CD8-positive, alpha-beta T cell (primary cell): ENCODE measurements at regions of chr11 and their contacts with region 1.

Region 1: GRCh38 chr11:111777094-111778046 is 11.2 kb upstream of the PPP2R1B start:
- DNase-seq: peak in 5 of 9 experiments; percentile 2 to 80 (median 21)
- ATAC-seq: peak; percentile 93
- H3K4me3 ChIP-seq: no peak overlapping the region
- H3K4me3 Mint-ChIP-seq: no peak overlapping the region
- H3K27ac ChIP-seq: no peak overlapping the region
- H3K27ac Mint-ChIP-seq: no peak overlapping the region
- H3K4me1 ChIP-seq: no peaks in the 10 kb centered on the region
- H3K4me1 Mint-ChIP-seq: no peaks in the 10 kb centered on the region
- H3K27me3 ChIP-seq: no peaks in the 10 kb centered on the region
- H3K27me3 Mint-ChIP-seq: no peaks in the 10 kb centered on the region
- CTCF ChIP-seq: peak; percentile 75

Region 2: GRCh38 chr11:111454561-111455192 is 322.7 kb before region 1 on chr11:
- CTCF ChIA-PET with region 1: interaction called, 6 read pairs
- POLR2A ChIA-PET with region 1: no interaction called
- intact Hi-C with region 1: loop called (anchors 2 to 5 kb)
- DNase-seq: peak in 8 of 9 experiments; percentile 19 to 61 (median 49)
- ATAC-seq: peak; percentile 61
- H3K4me3 ChIP-seq: no peak overlapping the region
- H3K4me3 Mint-ChIP-seq: no peak overlapping the region
- H3K27ac ChIP-seq: no peak overlapping the region
- H3K27ac Mint-ChIP-seq: no peak overlapping the region
- H3K4me1 ChIP-seq: no peaks in the 10 kb centered on the region
- H3K4me1 Mint-ChIP-seq: no peaks in the 10 kb centered on the region
- H3K27me3 ChIP-seq: no peaks in the 10 kb centered on the region
- H3K27me3 Mint-ChIP-seq: peaks cover 8% of the 10 kb centered on the region
- CTCF ChIP-seq: peak; percentile 20

Region 3: DNA sequence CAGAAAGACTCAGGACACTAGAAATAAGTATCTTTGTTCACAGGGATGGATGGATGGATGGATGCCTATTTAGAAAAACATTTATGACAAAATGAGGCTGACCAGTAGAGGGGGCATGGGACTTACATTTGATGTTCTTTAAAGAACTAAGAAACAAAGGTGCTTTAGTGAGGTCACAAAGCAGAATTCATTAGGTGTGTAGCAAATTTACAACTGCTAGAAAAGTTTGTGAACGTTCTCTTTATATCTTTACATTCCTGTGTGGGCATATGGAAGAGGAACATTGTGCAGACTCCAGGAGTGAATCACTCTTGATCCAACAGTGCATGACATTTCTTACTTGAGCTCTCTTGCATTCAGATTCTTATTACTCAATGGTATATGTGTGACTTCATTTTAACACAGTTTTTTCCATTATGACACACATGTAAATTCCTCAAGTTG is 191.0 kb before region 1 on chr11:
- CTCF ChIA-PET with region 1: interaction called, 163 read pairs
- POLR2A ChIA-PET with region 1: no interaction called
- intact Hi-C with region 1: loop called (anchors 1 kb)
- DNase-seq: peak in 8 of 9 experiments; percentile 8 to 77 (median 58)
- ATAC-seq: peak; percentile 83
- H3K4me3 ChIP-seq: no peak overlapping the region
- H3K4me3 Mint-ChIP-seq: no peak overlapping the region
- H3K27ac ChIP-seq: no peak overlapping the region
- H3K27ac Mint-ChIP-seq: no peak overlapping the region
- H3K4me1 ChIP-seq: no peaks in the 10 kb centered on the region
- H3K4me1 Mint-ChIP-seq: no peaks in the 10 kb centered on the region
- H3K27me3 ChIP-seq: no peaks in the 10 kb centered on the region
- H3K27me3 Mint-ChIP-seq: no peaks in the 10 kb centered on the region
- CTCF ChIP-seq: peak; percentile 76

Region 4: DNA sequence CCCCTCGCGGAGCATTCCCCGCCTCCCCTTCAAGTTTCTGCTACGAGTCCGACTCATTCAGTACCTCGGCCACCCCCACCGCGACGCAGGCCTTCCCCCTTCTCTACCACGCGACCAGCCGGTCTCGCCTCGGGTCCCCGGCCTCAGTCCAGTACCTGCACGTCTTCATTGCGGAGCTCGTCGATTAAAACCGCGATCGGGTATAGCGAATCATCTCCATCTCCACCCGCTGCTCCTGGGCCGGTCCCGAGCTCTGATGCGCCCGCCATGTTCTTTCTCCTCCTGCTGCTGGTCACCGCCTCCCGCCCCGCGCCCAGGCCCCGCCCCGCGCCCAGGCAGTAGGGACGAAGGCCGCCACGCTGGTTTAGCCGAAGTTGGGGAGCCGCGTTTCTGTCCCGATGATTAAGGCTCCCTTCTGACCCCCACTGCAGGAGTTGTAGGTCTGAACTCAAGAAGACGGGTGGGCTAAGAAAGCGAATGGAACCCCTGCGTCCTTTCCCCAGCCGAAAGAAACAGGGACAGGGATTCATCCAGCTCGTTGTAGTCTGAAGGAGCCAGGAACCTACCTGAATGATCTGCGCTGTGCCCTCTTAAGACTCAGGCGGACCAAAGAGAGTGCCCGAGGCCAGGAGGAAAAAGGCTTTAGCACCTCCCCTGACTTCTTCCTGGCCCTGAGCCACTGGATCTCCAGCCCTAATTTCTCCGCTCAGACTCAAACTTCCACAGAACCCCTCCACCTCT is 11.1 kb before region 1 on chr11 and contains the start of gene PPP2R1B:
- CTCF ChIA-PET with region 1: interaction called, 50 read pairs
- POLR2A ChIA-PET with region 1: interaction called, 5 read pairs
- intact Hi-C with region 1: no loop called
- DNase-seq: peak; percentile 33 to 83 (median 73)
- ATAC-seq: peak; percentile 98
- H3K4me3 ChIP-seq: peak within 1 kb of the TSS; percentile 86 to 97
- H3K4me3 Mint-ChIP-seq: peak within 1 kb of the TSS; percentile 99
- H3K27ac ChIP-seq: peak within 1 kb of the TSS; percentile 63 to 67
- H3K27ac Mint-ChIP-seq: peak within 1 kb of the TSS; percentile 97
- H3K4me1 ChIP-seq: peaks cover 12% of the 10 kb centered on the region
- H3K4me1 Mint-ChIP-seq: peaks cover 39% of the 10 kb centered on the region
- H3K27me3 ChIP-seq: no peaks in the 10 kb centered on the region
- H3K27me3 Mint-ChIP-seq: no peaks in the 10 kb centered on the region
- CTCF ChIP-seq: no peak
- total RNA-seq, gene PPP2R1B: 47.4 to 53.8 TPM

Region 5: GRCh38 chr11:111833524-111833923 is 56.2 kb after region 1 on chr11:
- CTCF ChIA-PET with region 1: interaction called, 10 read pairs
- POLR2A ChIA-PET with region 1: no interaction called
- intact Hi-C with region 1: no loop called
- DNase-seq: no peak
- ATAC-seq: no peak
- H3K4me3 ChIP-seq: no peak overlapping the region
- H3K4me3 Mint-ChIP-seq: no peak overlapping the region
- H3K27ac ChIP-seq: no peak overlapping the region
- H3K27ac Mint-ChIP-seq: no peak overlapping the region
- H3K4me1 ChIP-seq: no peaks in the 10 kb centered on the region
- H3K4me1 Mint-ChIP-seq: no peaks in the 10 kb centered on the region
- H3K27me3 ChIP-seq: no peaks in the 10 kb centered on the region
- H3K27me3 Mint-ChIP-seq: no peaks in the 10 kb centered on the region
- CTCF ChIP-seq: no peak